Mammary epithelial cell (primary cell): ENCODE measurements at regions of chr19 and their contacts with region 1.

Region 1: DNA sequence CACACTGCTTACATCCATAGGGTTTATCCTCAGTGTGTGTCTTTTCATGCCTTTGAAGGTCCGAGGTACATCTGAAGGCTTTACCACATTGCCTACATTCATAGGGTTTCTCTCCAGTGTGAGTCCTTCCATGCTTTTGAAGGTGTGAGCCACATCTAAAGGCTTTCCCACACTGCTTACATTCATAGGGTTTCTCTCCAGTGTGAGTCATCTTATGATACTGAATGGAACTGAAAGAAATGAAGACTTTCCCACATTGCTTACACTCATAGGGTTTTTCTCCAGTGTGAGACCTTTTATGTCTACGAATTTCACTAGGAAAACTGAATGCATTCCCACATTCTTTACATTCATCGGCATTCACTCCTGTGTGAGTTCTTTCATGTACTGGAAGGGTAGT is 7.1 kb downstream of the ZNF20 start:
- DNase-seq: no peak
- H3K4me3 ChIP-seq: no peak overlapping the region
- H3K27ac ChIP-seq: no peak overlapping the region
- H3K4me1 ChIP-seq: no peaks in the 10 kb centered on the region
- H3K27me3 ChIP-seq: no peaks in the 10 kb centered on the region
- CTCF ChIP-seq: no peak

Region 2: DNA sequence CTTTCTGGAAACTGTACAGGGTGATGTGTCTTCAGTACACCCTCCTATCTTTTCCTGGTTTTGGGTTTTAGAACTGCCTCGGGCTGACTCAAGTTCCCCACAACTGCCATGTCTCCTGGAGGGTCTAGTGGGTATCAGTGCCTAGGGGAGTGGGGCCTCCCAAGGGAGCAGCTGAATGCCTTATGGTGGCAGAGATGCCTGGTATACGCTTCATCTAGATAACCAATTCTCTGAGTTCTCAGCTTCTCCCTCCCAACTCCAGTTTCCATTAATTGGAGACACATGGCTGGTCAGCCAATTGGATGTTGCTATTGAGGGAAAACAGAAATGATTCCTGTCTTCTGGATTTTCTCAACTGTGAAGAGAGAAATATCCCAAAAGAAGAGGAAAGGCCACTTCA is 271.8 kb before region 1 on chr19:
- CTCF ChIA-PET with region 1: no interaction called
- dilution Hi-C with region 1: no loop called
- in situ Hi-C with region 1: no loop called
- intact Hi-C with region 1: no loop called
- DNase-seq: no peak
- H3K4me3 ChIP-seq: no peak overlapping the region
- H3K27ac ChIP-seq: no peak overlapping the region
- H3K4me1 ChIP-seq: no peaks in the 10 kb centered on the region
- H3K27me3 ChIP-seq: no peaks in the 10 kb centered on the region
- CTCF ChIP-seq: no peak

Region 3: GRCh38 chr19:11949201-11949600 is 183.9 kb before region 1 on chr19:
- CTCF ChIA-PET with region 1: no interaction called
- dilution Hi-C with region 1: loop called (anchors 5 kb)
- in situ Hi-C with region 1: loop called in 1 of 2 experiments (anchors 25 kb)
- intact Hi-C with region 1: no loop called
- DNase-seq: no peak
- H3K4me3 ChIP-seq: no peak overlapping the region
- H3K27ac ChIP-seq: no peak overlapping the region
- H3K4me1 ChIP-seq: no peaks in the 10 kb centered on the region
- H3K27me3 ChIP-seq: no peaks in the 10 kb centered on the region
- CTCF ChIP-seq: no peak

Region 4: DNA sequence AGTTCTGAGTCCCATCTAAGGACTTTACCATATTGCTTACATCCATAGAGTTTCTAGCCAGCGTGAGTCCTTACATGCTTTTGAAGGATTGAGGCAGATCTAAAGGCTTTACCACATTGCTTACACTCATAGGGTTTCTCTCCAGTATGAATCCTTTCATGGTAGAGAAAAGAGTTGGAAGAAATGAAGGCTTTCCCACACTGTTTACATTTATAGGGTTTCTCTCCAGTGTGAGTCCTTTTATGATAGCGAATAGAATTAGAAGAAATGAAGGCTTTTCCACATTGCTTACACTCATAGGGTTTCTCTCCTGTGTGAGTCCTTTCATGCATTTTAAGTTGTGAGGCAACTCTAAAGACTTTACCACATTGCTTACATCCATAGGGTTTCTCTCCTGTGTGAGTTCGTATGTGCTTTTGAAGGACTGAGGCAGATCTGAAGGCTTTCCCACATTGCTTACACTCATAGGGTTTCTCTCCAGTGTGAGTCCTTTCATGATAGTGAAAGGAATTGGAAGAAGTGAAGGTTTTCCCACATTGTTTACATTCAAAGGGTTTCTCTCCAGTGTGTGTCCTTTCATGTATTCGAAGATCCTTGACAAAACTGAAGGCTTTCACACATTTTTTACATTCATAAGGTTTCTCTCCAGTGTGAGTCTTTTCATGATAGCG is 89.2 kb before region 1 on chr19:
- CTCF ChIA-PET with region 1: no interaction called
- dilution Hi-C with region 1: loop called (anchors 5 kb)
- in situ Hi-C with region 1: no loop called
- intact Hi-C with region 1: no loop called
- DNase-seq: no peak
- H3K4me3 ChIP-seq: no peak overlapping the region
- H3K27ac ChIP-seq: no peak overlapping the region
- H3K4me1 ChIP-seq: no peaks in the 10 kb centered on the region
- H3K27me3 ChIP-seq: no peaks in the 10 kb centered on the region
- CTCF ChIP-seq: no peak

Region 5: DNA sequence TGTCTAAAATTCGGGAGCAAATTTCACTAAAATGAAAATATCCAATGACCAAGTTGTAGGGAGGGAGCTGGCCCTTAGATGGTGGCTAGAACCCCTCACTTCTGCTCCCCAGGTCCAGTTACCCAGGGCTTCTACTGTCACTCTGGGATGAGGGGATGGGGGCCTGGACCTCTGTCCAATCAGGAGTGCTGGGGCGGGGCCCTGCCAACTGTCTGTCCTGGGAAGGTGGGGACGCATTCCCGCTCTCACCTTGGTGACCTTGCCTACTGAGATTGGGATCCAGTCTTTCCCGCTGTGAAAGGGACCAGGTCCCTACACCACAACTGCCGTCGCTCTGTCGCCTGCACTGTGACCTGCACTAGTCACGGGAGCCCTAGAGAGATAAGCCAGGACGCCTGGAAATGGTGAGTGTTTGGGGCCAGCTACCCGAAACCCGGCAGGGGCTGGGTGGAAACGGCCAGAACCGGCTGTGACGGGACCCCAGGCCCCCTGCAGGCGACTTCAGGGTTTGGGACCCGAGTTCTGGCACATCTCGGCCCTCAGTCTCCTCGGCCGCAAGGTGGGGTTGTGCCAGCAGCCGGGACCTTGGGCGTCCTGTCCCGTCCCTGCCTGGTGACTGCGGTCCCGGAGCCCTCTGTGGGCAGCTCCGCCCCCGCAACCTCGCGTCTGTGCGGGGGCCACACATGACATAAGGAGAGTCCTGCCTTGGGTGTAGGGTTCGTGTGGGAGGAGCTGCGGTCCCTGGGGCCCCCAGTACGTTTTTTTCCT is 15.7 kb before region 1 on chr19:
- CTCF ChIA-PET with region 1: no interaction called
- dilution Hi-C with region 1: no loop called
- in situ Hi-C with region 1: no loop called
- intact Hi-C with region 1: no loop called
- DNase-seq: no peak
- H3K4me3 ChIP-seq: no peak overlapping the region
- H3K27ac ChIP-seq: no peak overlapping the region
- H3K4me1 ChIP-seq: no peaks in the 10 kb centered on the region
- H3K27me3 ChIP-seq: no peaks in the 10 kb centered on the region
- CTCF ChIP-seq: no peak

Region 6: GRCh38 chr19:12162882-12163806 is 30.1 kb after region 1 on chr19 and contains the start of gene ZNF136:
- CTCF ChIA-PET with region 1: no interaction called
- dilution Hi-C with region 1: no loop called
- in situ Hi-C with region 1: no loop called
- intact Hi-C with region 1: no loop called
- DNase-seq: peak; percentile 96
- H3K4me3 ChIP-seq: peak within 1 kb of the TSS; percentile 67 to 93 (median 67)
- H3K27ac ChIP-seq: peak within 1 kb of the TSS; percentile 76
- H3K4me1 ChIP-seq: peaks cover 5% of the 10 kb centered on the region
- H3K27me3 ChIP-seq: no peaks in the 10 kb centered on the region
- CTCF ChIP-seq: no peak
- total RNA-seq, gene ZNF136: 5.4 to 6.7 TPM

Region 7: GRCh38 chr19:12230751-12231733 is 98.0 kb after region 1 on chr19:
- CTCF ChIA-PET with region 1: no interaction called
- dilution Hi-C with region 1: loop called (anchors 5 kb)
- in situ Hi-C with region 1: no loop called
- intact Hi-C with region 1: no loop called
- DNase-seq: no peak
- H3K4me3 ChIP-seq: no peak overlapping the region
- H3K27ac ChIP-seq: no peak overlapping the region
- H3K4me1 ChIP-seq: no peaks in the 10 kb centered on the region
- H3K27me3 ChIP-seq: no peaks in the 10 kb centered on the region
- CTCF ChIP-seq: no peak